ENCODE measurements at regions of chr20 and their contacts with region 1.

Region 1: DNA sequence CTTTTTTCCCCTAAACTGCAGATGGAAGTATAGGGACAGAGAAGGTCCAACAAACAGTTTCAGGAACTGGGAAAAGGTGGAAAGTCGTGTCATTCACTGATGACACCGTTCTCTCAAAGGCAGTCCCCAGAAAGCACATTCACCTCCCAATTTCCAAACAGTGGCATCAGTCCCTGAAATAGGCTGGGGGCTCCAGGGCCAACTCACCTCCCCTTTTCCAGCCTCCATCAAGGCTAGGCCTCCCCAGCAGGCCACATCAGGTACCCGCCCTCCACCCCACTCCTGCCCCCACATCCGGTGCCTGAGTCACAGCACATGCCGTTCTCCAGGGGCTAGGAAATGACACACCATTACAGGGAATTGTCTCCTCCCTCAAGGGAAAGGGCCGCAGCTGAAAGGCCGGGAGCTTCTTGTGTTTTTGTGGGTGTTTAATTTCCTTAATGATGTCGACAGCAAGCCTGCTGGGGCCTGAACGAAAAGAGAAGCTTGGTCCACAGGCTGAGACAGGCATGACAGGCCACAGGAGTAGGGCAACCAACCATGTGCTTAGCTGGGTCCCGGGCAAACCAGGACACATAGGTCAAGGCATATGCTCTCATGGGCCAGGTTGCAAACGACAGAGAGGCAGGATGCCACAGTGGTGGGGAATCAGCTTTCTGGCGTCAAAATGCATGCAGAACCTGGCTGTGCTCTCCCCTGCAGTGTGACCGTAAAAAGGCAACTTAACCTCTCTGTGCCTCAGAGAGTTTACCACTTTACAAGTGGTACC is 39.2 kb downstream of the ZMYND8 start:
- DNase-seq: no peak
- H3K4me3 ChIP-seq: peak overlapping the region in 2 of 4 experiments; percentile 37 to 58; a peak in 3 of 8 replicates
- H3K27ac ChIP-seq: peak overlapping the region; percentile 97
- H3K4me1 ChIP-seq: peaks cover 51 to 68% (median 55%) of the 10 kb centered on the region in 4 experiments
- H3K27me3 ChIP-seq: no peaks in the 10 kb centered on the region
- CTCF ChIP-seq: no peak
- EP300 ChIP-seq: no peak
- POLR2A ChIP-seq: peak in 1 of 2 experiments; percentile 27; a peak in 2 of 3 replicates
- RAD21 ChIP-seq: no peak

Region 2: DNA sequence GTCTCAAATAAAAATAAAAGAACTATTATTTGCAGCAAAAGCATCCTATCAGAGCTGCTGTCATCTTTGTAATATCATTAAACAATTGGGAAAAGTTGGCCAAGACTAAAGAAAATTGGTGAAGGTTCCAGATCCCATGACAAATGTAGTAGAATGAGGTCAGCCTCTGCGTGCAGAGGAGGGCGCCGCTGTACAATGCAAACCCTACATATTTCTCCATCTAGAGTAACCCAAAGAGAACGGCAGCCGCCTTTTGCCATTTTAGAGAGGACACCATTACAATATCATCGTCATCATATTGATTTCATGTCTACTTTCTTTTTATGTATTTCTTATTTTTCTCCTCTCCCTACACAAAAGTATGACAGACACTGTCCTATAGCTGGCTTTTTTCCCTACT is 20.4 kb before region 1 on chr20:
- CTCF ChIA-PET with region 1: interaction called, 11 read pairs
- POLR2A ChIA-PET with region 1: interaction called, 74 read pairs
- DNase-seq: no peak
- H3K4me3 ChIP-seq: no peak overlapping the region
- H3K27ac ChIP-seq: no peak overlapping the region
- H3K4me1 ChIP-seq: peaks cover 0 to 9% (median 0%) of the 10 kb centered on the region in 4 experiments; a peak in 1 of 7 replicates
- H3K27me3 ChIP-seq: no peaks in the 10 kb centered on the region
- CTCF ChIP-seq: peak; percentile 19 to 36 (median 26); a peak in 3 of 4 replicates
- EP300 ChIP-seq: no peak
- POLR2A ChIP-seq: no peak
- RAD21 ChIP-seq: peak; percentile 59 to 68

Region 3: DNA sequence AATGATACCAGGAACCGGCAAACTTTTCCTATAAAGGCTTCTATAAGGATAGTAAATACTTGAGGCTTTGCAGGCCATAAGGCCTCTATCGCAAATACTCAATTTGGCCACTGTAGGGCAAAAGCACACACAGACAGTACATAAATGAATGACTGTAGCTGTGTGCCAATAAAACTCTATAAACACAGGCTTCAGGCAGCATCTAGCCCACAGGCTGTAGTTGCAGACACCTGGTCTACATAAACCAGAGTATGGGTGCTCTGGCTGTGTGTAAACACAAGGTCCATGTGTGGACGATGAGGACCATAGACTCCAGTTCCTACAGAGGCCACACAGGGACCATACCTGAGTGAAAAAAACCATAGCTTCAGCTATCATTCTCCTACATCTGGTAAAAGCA is 13.0 kb before region 1 on chr20:
- CTCF ChIA-PET with region 1: interaction called, 6 read pairs
- POLR2A ChIA-PET with region 1: interaction called, 74 read pairs
- DNase-seq: no peak
- H3K4me3 ChIP-seq: no peak overlapping the region
- H3K27ac ChIP-seq: no peak overlapping the region
- H3K4me1 ChIP-seq: peaks cover 5 to 15% (median 10%) of the 10 kb centered on the region in 4 experiments
- H3K27me3 ChIP-seq: no peaks in the 10 kb centered on the region
- CTCF ChIP-seq: no peak
- EP300 ChIP-seq: no peak
- POLR2A ChIP-seq: no peak
- RAD21 ChIP-seq: no peak

Region 4: DNA sequence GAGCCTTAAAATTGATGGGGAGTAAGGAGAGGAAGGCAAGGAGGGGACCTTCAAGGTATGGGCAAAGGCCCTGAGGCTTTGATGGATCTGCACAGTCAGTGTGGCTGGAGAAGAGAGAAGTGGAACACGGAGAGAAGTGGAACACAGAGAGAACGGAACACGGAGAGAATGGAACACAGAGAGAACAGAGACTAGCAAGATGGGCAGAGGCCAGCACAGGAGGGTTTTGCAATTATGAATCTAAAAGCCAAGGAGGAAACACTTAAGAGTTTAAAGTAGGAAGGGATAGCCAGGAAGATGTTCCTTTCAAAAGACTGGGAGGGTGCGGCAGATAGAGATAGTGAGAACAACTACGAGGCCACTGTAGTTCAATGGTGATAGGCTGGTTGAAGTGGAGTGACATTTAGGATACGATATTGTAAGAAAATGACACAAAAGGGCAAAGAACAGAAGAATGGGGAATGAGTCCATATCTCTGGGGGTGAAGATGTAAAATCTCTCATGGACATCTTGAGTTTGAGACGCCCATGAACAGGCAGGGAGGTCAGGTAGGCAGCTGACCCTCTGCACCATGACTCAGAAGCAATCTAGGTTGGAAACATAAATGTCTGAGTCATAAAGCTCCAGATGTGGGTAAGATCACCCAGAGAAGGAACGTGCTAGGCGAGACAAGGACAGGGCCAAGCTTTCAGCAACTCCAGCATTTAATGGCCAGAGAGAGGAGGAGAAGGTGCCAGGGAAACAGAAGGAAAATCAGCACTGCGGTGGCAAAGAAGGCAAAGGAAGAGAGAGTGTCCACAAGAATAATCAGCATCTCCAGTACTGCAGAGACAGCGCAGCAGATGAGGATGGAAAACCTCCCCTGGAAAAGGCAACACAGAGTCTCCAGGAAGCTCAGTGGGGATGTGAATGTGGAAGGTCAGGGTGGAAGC is 13.9 kb after region 1 on chr20:
- CTCF ChIA-PET with region 1: interaction called, 3 read pairs
- POLR2A ChIA-PET with region 1: interaction called, 1,191 read pairs
- DNase-seq: no peak
- H3K4me3 ChIP-seq: no peak overlapping the region
- H3K27ac ChIP-seq: no peak overlapping the region
- H3K4me1 ChIP-seq: peaks cover 2 to 30% (median 10%) of the 10 kb centered on the region in 4 experiments; a peak in 5 of 7 replicates
- H3K27me3 ChIP-seq: no peaks in the 10 kb centered on the region
- CTCF ChIP-seq: no peak
- EP300 ChIP-seq: no peak
- POLR2A ChIP-seq: no peak
- RAD21 ChIP-seq: no peak

Region 5: DNA sequence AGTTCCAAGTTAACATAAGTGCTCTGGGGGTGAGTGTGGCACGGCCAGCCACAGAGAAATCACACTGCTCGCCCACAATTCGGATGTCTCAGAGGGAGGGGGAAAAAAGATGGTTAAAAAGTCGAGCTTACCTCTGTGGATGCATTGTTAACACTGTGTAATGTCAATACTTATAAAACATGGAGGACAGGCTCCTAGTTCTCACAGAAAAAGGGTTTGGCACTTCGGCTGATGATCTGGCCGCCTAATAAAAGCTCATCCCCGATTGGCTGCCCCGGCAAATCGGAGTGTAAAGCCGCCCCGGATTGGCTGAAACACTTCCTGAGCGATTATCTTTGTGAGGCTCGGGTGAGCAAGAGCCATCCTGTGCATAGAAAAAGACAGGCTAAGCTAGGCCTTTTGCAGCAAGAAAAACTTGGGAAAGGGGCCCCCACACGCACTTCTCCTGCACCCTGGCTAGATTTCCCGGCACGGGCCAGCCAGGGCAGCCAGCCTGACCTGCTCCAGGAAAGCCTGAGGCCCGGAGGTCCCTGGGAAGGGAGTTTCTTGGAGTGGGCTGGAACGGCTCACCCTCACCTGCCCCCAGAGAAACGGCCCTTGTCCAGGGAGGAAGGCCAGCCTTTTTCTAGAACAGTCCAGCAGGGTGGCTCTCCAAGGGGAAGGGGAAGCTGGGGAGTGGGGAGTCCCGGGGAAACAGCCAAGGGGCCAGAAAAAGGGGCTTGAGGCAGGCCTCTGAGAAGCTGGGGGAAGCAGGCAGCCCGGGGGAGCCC is 39.4 kb after region 1 on chr20 and contains the start of gene ZMYND8:
- CTCF ChIA-PET with region 1: interaction called, 8 read pairs
- POLR2A ChIA-PET with region 1: interaction called, 1,191 read pairs
- DNase-seq: peak; percentile 70 to 98
- H3K4me3 ChIP-seq: peak within 1 kb of the TSS in 2 of 4 experiments; percentile 6 to 37; a peak in 5 of 8 replicates
- H3K27ac ChIP-seq: peak within 1 kb of the TSS; percentile 98
- H3K4me1 ChIP-seq: peaks cover 72 to 86% (median 79%) of the 10 kb centered on the region in 4 experiments
- H3K27me3 ChIP-seq: no peaks in the 10 kb centered on the region
- CTCF ChIP-seq: no peak
- EP300 ChIP-seq: no peak
- POLR2A ChIP-seq: no peak; a peak in 1 of 3 replicates
- RAD21 ChIP-seq: no peak
- total RNA-seq, gene ZMYND8: 163 TPM in 2 replicates

Region 6: DNA sequence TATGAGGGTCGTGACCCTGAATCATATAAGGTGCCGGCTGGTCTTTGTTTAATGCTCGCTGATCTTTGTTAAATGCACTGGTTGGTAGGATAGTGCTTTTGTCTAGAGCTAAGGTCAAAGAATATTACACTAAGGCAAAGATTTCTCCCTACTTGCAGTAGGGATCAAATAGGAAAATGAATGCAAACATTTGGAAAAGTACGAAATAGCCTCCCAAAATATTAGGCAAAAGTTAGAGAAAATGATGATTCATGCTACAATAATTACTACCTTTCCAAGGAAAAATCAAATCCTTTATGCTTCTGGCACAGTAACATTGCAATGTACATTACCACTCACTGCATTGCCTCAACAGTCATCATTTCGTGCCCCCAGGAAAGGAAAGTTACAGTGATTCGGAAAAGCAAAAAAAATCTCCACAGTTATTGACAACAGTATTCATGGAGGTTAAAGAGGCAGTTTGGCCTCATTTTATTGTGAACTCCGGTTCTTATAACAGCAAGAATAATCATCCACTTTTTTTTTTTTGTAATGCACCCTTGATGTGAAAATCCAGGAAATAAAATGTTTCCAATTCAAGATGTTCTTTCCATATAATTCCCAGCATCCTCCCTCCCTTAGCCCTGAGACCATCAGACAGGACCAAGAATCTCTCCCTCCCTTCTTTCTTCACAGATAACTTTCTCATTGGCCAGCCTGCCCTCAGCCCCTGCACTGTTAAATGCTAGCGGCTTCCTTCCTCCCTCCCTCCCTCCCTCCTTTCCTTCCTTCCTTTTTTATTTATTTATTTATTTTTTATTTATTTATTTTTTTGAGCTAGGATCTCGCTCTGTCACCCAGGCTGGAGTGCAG is 101.0 kb after region 1 on chr20:
- CTCF ChIA-PET with region 1: no interaction called
- POLR2A ChIA-PET with region 1: no interaction called
- DNase-seq: no peak
- H3K4me3 ChIP-seq: no peak overlapping the region
- H3K27ac ChIP-seq: no peak overlapping the region
- H3K4me1 ChIP-seq: peaks cover 0 to 4% (median 0%) of the 10 kb centered on the region in 4 experiments; a peak in 1 of 7 replicates
- H3K27me3 ChIP-seq: no peaks in the 10 kb centered on the region
- CTCF ChIP-seq: no peak
- EP300 ChIP-seq: no peak
- POLR2A ChIP-seq: no peak
- RAD21 ChIP-seq: no peak